Dendritic cell treated with granulocyte-macrophage colony-stimulating factor and Interleukin-4, amounts not matched to agents 40 ng/mL and 50 ng/mL, for 4 days (primary cell): ENCODE measurements at regions of chr11 and their contacts with region 1.

Region 1: GRCh38 chr11:62461740-62462507 is 43.1 kb downstream of the SCGB1A1 start:
- H3K4me3 Mint-ChIP-seq: peak overlapping the region; percentile 10
- H3K27ac Mint-ChIP-seq: peak overlapping the region; percentile 83
- H3K4me1 Mint-ChIP-seq: peaks cover 65% of the 10 kb centered on the region
- H3K27me3 Mint-ChIP-seq: no peaks in the 10 kb centered on the region

Region 2: DNA sequence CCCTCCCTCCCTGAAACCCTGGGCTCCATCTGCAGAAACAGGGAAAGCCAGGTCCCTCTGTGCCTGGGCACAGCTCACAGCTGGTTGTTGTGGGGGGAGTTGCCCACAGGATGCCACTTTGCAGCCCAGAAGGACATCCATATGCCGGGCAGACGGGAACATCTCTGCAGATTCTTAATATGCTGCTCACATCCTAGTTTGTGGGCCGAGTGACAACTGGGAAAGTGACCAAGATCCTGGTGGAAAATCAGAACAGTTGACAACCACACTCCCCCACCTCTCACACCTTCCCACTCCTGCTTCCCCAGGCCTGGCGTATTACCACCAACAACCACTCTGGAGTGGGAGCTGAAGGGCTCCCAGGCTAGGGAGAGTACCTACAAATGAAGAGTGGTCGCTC is 50.4 kb before region 1 on chr11:
- intact Hi-C with region 1: no loop called
- H3K4me3 Mint-ChIP-seq: no peak overlapping the region
- H3K27ac Mint-ChIP-seq: no peak overlapping the region
- H3K4me1 Mint-ChIP-seq: peaks cover 15% of the 10 kb centered on the region
- H3K27me3 Mint-ChIP-seq: no peaks in the 10 kb centered on the region

Region 3: GRCh38 chr11:62427630-62428233 is 34.2 kb before region 1 on chr11:
- intact Hi-C with region 1: loop called (anchors 5 kb)
- H3K4me3 Mint-ChIP-seq: peak overlapping the region; percentile 9
- H3K27ac Mint-ChIP-seq: peak overlapping the region; percentile 83
- H3K4me1 Mint-ChIP-seq: peaks cover 78% of the 10 kb centered on the region
- H3K27me3 Mint-ChIP-seq: peaks cover 5% of the 10 kb centered on the region

Region 4: GRCh38 chr11:62497132-62497915 is 35.4 kb after region 1 on chr11:
- intact Hi-C with region 1: loop called (anchors 5 kb)
- H3K4me3 Mint-ChIP-seq: no peak overlapping the region
- H3K27ac Mint-ChIP-seq: peak overlapping the region; percentile 60
- H3K4me1 Mint-ChIP-seq: peaks cover 46% of the 10 kb centered on the region
- H3K27me3 Mint-ChIP-seq: peaks cover 3% of the 10 kb centered on the region

Region 5: GRCh38 chr11:62981743-62982142 is 519.8 kb after region 1 on chr11:
- intact Hi-C with region 1: no loop called
- H3K4me3 Mint-ChIP-seq: no peak overlapping the region
- H3K27ac Mint-ChIP-seq: no peak overlapping the region
- H3K4me1 Mint-ChIP-seq: no peaks in the 10 kb centered on the region
- H3K27me3 Mint-ChIP-seq: peaks cover 15% of the 10 kb centered on the region